ENCODE measurements at regions of chr15 and their contacts with region 1.

Region 1: GRCh38 chr15:71575474-71576045 is 234.8 kb upstream of the NR2E3 start:
- DNase-seq: no peak

Region 2: DNA sequence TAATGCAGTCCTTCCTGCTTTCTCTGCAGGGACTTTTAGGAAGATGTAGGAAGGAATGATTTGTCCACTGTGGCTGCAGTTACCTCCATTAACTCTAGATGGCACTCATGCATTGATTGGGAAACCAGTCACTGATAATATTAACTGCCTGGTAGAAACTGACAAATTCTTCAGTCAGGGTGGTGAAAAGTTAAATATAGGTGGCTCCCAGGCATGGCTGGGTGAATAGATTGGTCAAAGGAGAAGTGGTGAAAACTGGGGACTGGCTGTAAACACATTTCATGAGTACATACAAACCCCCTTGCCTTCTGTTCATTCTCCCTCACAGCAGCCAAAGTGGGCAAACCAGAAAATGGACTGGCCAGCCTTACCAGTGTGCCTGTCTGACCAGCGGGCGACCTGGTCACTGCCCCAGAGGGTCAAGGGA is 126.9 kb before region 1 on chr15:
- CTCF ChIA-PET with region 1: interaction called, 14 read pairs
- POLR2A ChIA-PET with region 1: no interaction called
- DNase-seq: peak; percentile 60

Region 3: DNA sequence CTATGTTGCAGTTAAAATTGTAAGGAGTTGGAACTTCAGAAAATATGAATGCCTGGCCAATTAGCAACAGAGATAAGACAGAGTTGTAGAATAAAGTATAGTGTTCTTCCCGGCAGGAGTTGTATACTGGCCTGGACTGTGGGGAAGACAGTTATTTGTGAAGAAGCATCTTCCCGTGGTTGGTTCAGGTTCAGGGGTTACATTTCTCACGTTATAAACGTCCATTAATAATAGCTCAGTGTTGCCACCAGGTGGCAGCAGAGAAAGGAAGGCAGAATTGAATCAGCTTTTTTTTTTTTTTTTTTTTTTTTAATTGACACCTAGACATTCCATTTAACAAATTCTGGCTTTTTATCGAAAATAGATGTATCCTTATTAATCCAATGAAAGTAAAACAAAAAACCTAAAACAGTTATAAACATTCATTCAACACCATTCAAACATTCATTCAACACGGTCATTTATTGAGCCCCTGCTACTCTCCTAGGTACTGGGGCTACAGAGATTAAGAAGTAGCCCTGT is 168.4 kb after region 1 on chr15:
- CTCF ChIA-PET with region 1: interaction called, 10 read pairs
- POLR2A ChIA-PET with region 1: no interaction called
- DNase-seq: peak; percentile 56